Breast epithelium (tissue), 4 donors: ENCODE measurements at regions of chr4 and their contacts with region 1.

Region 1: DNA sequence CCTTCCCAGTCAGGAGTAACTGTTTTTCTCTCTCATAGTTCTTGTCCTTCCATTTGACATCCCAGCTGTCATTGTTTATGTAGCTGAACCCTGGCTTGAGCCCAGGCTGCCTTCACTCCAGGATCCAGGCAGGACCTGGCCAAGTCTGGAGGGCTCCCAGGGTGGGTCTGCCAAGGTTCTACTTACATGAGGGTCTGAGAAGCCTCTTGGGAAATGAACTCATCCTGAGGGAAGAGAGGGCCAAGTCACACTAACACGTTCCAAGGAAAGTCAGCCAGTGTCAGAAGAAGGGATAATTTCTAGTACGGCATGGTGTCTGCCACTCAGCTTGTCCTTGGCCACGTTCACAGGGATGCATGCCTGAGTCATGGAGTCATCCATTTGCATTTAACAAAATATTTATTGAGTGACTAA is 54.8 kb upstream of the SRD5A3 start:
- DNase-seq: no peak
- H3K4me3 ChIP-seq: no peak overlapping the region
- H3K27ac ChIP-seq: no peak overlapping the region
- H3K4me1 ChIP-seq: no peaks in the 10 kb centered on the region
- H3K27me3 ChIP-seq: no peaks in the 10 kb centered on the region
- CTCF ChIP-seq: no peak
- POLR2A ChIP-seq: no peak

Region 2: DNA sequence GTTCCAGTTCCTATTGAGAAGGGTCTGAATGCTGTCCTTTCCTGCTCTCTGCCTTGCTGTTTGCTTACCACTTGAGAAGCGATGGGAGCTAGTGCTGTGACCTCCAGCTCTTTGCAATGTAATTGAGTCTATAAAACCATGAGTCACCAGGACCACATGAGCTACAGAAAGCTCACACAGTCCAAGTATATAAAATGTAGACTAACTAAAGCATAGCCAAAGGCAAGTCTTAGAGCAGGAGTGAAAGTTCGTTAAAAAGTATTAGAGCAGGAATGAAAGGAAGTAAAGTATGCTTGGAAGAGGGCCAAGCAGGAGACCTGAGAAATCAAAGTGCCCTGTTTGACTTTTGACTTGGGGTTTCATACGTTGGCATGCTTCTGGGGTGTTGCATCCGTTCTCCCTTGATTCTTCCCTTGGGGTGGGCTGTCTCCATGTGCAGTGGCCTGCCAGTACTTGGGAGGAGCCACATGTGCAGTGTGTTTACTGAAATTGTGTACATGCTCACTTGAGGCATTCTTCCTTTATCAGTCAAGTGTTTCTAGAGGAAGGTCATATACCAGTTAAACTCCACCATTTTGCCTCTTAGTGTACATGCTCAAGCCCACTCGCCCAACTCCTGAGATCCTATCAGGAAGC is 704.8 kb before region 1 on chr4:
- intact Hi-C with region 1: loop called (anchors 10 kb)
- DNase-seq: no peak
- H3K4me3 ChIP-seq: no peak overlapping the region
- H3K27ac ChIP-seq: no peak overlapping the region
- H3K4me1 ChIP-seq: no peaks in the 10 kb centered on the region
- H3K27me3 ChIP-seq: no peaks in the 10 kb centered on the region
- CTCF ChIP-seq: no peak
- POLR2A ChIP-seq: no peak

Region 3: DNA sequence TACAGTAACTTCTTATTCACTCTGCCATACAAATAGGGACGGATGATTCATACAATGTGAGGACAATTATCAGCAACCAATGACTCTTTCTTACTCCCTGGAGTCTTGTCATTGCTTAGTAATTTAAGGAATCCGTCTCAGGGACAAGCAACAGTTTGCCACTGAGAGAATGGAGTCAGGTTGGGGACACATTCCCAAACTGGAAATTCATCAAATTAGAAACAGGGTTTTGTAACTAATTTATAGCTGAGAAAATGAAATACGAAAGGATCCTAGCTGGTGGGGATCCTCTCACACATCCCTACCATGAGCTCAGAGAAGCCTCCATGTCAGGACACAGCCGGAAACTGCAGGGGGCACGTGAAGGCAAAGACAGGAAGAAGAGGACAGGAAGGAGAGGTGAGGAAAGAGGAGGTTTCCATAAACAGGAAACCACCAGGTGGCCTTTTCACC is 115.4 kb before region 1 on chr4:
- intact Hi-C with region 1: no loop called
- DNase-seq: no peak
- H3K4me3 ChIP-seq: no peak overlapping the region
- H3K27ac ChIP-seq: no peak overlapping the region
- H3K4me1 ChIP-seq: no peaks in the 10 kb centered on the region
- H3K27me3 ChIP-seq: no peaks in the 10 kb centered on the region
- CTCF ChIP-seq: no peak
- POLR2A ChIP-seq: no peak